Activated CD8-positive, alpha-beta T cell treated with anti-CD3 and anti-CD28 coated beads, Interleukin-2, amount 10 ng/mL, durations not matched to agents 7 days and 5 days (primary cell): ENCODE measurements at regions of chr2 and their contacts with region 1.

Region 1: DNA sequence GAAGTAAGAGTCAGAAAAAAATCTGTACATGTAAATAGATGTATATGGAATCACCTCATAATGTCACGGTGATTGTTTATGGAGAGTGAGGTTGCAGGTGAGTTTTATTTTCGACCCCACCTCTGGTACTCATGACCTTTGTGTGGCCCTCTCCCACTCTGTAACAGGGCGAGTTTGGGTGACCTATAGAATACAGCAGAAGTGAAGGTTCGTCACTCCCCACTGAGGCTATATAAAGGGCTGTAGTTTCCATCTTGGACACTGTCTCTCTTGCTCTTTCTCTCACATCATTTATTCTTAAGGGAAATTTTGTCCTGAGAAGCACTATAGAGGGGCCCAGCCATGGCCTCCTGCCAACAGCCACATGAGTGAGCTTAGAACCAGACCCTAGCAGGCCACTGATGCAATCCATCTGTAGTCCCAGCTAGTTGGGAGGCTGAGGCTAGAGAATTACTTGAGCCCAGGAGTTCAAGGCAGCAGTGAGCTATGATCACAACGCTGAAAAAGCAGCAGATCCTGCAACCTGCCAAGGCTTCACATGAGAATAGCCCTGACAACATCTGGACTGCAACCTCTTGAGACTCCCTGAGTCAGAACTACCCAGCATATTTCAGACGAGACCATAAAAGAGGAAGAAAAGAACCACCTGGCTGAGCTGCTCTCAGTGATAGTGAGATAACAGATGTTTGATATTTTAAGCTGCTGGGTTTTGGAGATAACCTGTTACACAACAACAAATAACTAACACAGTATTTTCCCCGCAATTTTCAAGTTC is 74.3 kb upstream of the SLC1A4 start:
- DNase-seq: no peak
- ATAC-seq: no peak
- H3K4me3 Mint-ChIP-seq: no peak overlapping the region
- H3K27ac Mint-ChIP-seq: no peak overlapping the region
- H3K4me1 Mint-ChIP-seq: peaks cover 41% of the 10 kb centered on the region
- H3K27me3 Mint-ChIP-seq: no peaks in the 10 kb centered on the region

Region 2: DNA sequence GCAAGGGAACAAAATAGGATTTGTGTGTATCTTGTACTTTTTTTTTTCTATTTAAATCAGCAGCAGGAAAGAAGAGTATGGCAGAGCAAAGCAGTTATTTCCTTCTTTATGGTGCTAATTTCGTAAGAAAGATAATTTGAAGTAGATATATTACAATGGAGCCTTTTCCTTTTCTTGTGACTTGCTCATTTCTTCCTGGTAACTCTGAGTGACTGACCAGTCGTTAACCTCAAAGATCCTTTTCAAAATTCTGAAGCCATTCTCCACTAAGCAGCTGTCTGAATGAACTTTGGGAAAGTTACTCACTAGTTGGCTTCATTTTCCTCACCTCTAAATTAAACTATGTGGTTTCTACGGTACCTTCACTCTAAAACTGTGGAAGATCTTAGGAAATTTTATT is 366.2 kb before region 1 on chr2:
- CTCF ChIA-PET with region 1: no interaction called
- POLR2A ChIA-PET with region 1: no interaction called
- DNase-seq: no peak
- ATAC-seq: no peak
- H3K4me3 Mint-ChIP-seq: no peak overlapping the region
- H3K27ac Mint-ChIP-seq: peak overlapping the region; percentile 14
- H3K4me1 Mint-ChIP-seq: peaks cover 11% of the 10 kb centered on the region
- H3K27me3 Mint-ChIP-seq: no peaks in the 10 kb centered on the region

Region 3: DNA sequence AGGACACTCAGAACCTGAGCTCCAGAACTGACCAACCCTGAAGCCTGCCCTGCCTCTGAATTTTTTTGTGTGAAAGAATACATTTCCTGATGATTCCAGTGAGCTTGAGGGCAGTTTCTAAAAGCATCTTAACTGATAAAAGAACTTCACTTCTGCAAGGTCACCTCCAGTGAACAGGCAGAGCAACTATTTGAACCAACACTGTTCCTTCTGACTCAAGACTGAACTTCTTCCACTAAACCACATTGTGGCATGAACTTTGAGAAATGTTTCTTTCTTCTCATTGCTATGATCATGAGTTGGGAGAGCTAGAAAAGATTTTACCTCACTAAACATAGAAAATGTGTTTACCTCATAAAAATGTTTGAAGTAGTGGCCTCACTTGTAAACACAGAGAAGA is 177.4 kb before region 1 on chr2:
- CTCF ChIA-PET with region 1: no interaction called
- POLR2A ChIA-PET with region 1: no interaction called
- DNase-seq: no peak
- ATAC-seq: peak; percentile 72
- H3K4me3 Mint-ChIP-seq: peak overlapping the region; percentile 24
- H3K27ac Mint-ChIP-seq: peak overlapping the region; percentile 59
- H3K4me1 Mint-ChIP-seq: peaks cover 51% of the 10 kb centered on the region
- H3K27me3 Mint-ChIP-seq: no peaks in the 10 kb centered on the region

Region 4: GRCh38 chr2:64937687-64938491 is 23.0 kb after region 1 on chr2:
- CTCF ChIA-PET with region 1: interaction called, 98 read pairs
- POLR2A ChIA-PET with region 1: no interaction called
- DNase-seq: no peak
- ATAC-seq: no peak
- H3K4me3 Mint-ChIP-seq: no peak overlapping the region
- H3K27ac Mint-ChIP-seq: no peak overlapping the region
- H3K4me1 Mint-ChIP-seq: peaks cover 31% of the 10 kb centered on the region
- H3K27me3 Mint-ChIP-seq: peaks cover 11% of the 10 kb centered on the region

Region 5: GRCh38 chr2:64978514-64979268 is 63.8 kb after region 1 on chr2:
- CTCF ChIA-PET with region 1: interaction called, 14 read pairs
- POLR2A ChIA-PET with region 1: interaction called, 4 read pairs
- DNase-seq: no peak
- ATAC-seq: peak; percentile 42
- H3K4me3 Mint-ChIP-seq: no peak overlapping the region
- H3K27ac Mint-ChIP-seq: no peak overlapping the region
- H3K4me1 Mint-ChIP-seq: peaks cover 39% of the 10 kb centered on the region
- H3K27me3 Mint-ChIP-seq: peaks cover 12% of the 10 kb centered on the region

Region 6: GRCh38 chr2:65003037-65003436 is 88.1 kb after region 1 on chr2:
- CTCF ChIA-PET with region 1: interaction called, 14 read pairs
- POLR2A ChIA-PET with region 1: no interaction called
- DNase-seq: no peak
- ATAC-seq: no peak
- H3K4me3 Mint-ChIP-seq: no peak overlapping the region
- H3K27ac Mint-ChIP-seq: peak overlapping the region; percentile 61
- H3K4me1 Mint-ChIP-seq: peaks cover 23% of the 10 kb centered on the region
- H3K27me3 Mint-ChIP-seq: no peaks in the 10 kb centered on the region

Region 7: GRCh38 chr2:65049010-65049669 is 134.2 kb after region 1 on chr2:
- CTCF ChIA-PET with region 1: interaction called, 23 read pairs
- POLR2A ChIA-PET with region 1: interaction called, 3 read pairs
- DNase-seq: no peak
- ATAC-seq: no peak
- H3K4me3 Mint-ChIP-seq: no peak overlapping the region
- H3K27ac Mint-ChIP-seq: no peak overlapping the region
- H3K4me1 Mint-ChIP-seq: peaks cover 20% of the 10 kb centered on the region
- H3K27me3 Mint-ChIP-seq: peaks cover 2% of the 10 kb centered on the region

Region 8: GRCh38 chr2:65092791-65093190 is 177.9 kb after region 1 on chr2:
- CTCF ChIA-PET with region 1: no interaction called
- POLR2A ChIA-PET with region 1: no interaction called
- DNase-seq: no peak
- ATAC-seq: no peak
- H3K4me3 Mint-ChIP-seq: no peak overlapping the region
- H3K27ac Mint-ChIP-seq: peak overlapping the region; percentile 6
- H3K4me1 Mint-ChIP-seq: peaks cover 6% of the 10 kb centered on the region
- H3K27me3 Mint-ChIP-seq: no peaks in the 10 kb centered on the region